Activated CD8-positive, alpha-beta T cell treated with anti-CD3 and anti-CD28 coated beads for 36 hours (primary cell): ENCODE measurements at regions of chrX and their contacts with region 1.

Region 1: DNA sequence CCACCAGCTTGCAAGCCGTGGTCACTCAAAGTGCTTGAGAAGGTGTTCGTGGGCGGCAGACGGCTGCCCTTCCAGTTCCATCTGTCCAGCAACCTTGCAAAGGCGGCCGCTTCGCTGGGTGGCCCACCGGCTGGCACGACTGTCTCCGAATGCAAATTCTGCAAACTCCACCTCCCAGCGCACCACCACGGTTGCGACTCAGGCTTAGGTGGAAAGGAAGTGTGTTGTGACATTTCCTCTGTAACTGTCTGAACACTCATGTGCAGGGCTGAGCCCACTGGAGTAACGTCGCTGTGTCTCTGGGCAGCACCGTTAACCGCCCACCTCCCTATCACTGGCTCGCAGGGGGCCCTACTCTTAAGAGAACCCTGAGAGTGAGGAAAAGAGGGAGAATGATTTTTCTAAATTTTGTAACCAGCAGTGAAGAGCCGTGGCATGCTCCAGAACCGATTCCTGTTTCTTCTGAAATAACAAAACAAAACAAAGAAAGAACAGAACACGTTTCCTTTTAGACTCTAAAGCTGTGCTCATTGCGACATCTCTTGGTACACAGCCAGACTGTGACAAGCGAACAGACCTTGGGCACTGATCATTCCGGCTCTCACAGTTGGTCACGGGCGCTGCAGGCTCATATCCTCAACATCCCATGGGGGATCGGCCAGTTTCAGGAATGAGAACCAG is at the start of gene P2RY8:
- DNase-seq: peak; percentile 90
- ATAC-seq: peak; percentile 76
- H3K4me3 Mint-ChIP-seq: peak within 1 kb of the TSS; percentile 96
- H3K27ac Mint-ChIP-seq: peak within 1 kb of the TSS; percentile 99
- H3K4me1 Mint-ChIP-seq: peaks cover 10% of the 10 kb centered on the region
- H3K27me3 Mint-ChIP-seq: no peaks in the 10 kb centered on the region
- CTCF ChIP-seq: no peak
- total RNA-seq, gene P2RY8: 27.5 to 28.3 TPM

Region 2: GRCh38 chrX:1491851-1492349 is 45.3 kb before region 1 on chrX:
- CTCF ChIA-PET with region 1: no interaction called
- POLR2A ChIA-PET with region 1: no interaction called
- intact Hi-C with region 1: no loop called
- DNase-seq: peak; percentile 89
- ATAC-seq: peak; percentile 94
- H3K4me3 Mint-ChIP-seq: peak overlapping the region; percentile 7
- H3K27ac Mint-ChIP-seq: peak overlapping the region; percentile 48
- H3K4me1 Mint-ChIP-seq: peaks cover 23% of the 10 kb centered on the region
- H3K27me3 Mint-ChIP-seq: no peaks in the 10 kb centered on the region
- CTCF ChIP-seq: no peak

Region 3: DNA sequence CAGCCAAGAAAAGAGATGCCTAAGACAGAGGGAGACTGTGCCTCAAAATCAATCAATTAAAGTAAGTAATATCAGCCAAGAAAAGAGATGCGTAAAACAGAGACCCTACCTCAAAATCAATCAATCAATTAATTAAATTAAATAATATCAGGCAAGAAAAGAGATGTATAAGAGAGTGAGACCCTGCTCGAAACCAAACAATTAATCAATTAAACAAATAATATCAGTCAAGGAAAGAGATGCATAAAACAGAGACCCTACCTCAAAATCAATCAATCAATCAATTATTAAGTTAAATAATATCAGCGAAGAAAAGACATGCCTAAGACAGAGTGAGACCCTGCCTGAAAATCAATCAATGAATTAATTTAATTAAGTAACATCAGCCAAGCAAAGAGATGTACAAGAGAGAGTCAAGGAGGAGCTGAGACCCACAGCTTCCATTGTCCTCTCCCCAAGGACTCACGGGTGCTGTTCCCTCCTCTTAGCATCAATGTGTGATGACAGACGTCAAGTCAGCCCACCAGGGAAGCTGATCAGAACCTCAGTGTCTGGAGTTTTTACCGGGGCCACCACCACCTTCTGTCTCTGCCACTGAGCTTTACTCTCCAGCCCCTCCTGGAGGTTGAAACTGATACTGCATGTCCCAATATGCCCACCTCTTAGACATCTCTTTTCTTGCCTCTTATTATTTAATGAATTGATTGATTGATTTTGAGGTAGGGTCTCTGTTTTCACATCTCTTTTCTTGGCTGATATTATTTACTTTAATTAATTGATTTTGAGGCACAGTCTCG is 43.8 kb after region 1 on chrX:
- CTCF ChIA-PET with region 1: no interaction called
- POLR2A ChIA-PET with region 1: no interaction called
- intact Hi-C with region 1: loop called (anchors 2 kb)
- DNase-seq: peak; percentile 92
- ATAC-seq: peak; percentile 93
- H3K4me3 Mint-ChIP-seq: no peak overlapping the region
- H3K27ac Mint-ChIP-seq: no peak overlapping the region
- H3K4me1 Mint-ChIP-seq: peaks cover 16% of the 10 kb centered on the region
- H3K27me3 Mint-ChIP-seq: no peaks in the 10 kb centered on the region
- CTCF ChIP-seq: peak; percentile 92